ENCODE measurements at regions of chr1 and their contacts with region 1.

Region 1: DNA sequence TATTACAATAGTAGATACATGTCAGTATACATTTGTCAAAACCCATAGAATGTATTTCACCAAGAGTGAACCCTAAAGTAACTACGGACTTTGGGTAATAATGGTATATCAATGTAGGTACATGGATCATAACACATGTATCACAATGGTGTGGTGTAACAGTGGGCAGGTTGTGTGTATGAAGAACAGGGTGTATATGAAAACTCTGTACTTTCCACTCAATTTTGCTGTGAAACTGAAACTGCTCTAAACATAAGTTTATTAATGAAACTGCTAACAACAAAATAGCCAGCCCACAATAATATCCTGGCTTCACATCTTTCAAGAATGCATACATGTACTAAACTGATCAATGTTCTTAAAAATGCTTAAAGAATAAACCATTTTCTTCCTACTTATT is 90.2 kb downstream of the RUSC1 start:
- DNase-seq: no peak
- H3K4me3 ChIP-seq: no peak overlapping the region
- H3K27ac ChIP-seq: no peak overlapping the region
- H3K4me1 ChIP-seq: no peaks in the 10 kb centered on the region
- H3K27me3 ChIP-seq: no peaks in the 10 kb centered on the region
- CTCF ChIP-seq: no peak

Region 2: DNA sequence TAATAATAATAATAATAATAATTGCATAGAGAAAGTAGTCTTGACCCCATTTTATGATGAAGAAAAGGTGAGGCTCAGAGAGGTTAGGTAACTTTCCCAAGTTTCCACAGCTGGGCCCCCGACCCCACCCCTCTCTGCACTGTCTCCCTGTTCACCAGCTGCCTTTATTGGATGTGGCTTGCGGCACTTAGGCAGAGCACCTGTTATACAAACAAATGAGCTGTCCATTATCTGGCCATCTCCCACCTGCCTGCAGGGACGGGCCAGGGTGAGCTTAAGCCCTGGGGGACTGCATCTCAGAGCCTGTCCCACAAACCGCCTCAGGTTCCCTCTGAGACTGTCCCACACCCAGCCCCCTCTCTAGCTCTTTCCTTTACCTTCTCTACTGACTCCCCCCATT is 293.3 kb before region 1 on chr1:
- CTCF ChIA-PET with region 1: no interaction called
- dilution Hi-C with region 1: no loop called
- in situ Hi-C with region 1: no loop called
- intact Hi-C with region 1: no loop called
- DNase-seq: no peak
- H3K4me3 ChIP-seq: no peak overlapping the region
- H3K27ac ChIP-seq: no peak overlapping the region
- H3K4me1 ChIP-seq: peaks cover 4% of the 10 kb centered on the region
- H3K27me3 ChIP-seq: no peaks in the 10 kb centered on the region
- CTCF ChIP-seq: no peak

Region 3: DNA sequence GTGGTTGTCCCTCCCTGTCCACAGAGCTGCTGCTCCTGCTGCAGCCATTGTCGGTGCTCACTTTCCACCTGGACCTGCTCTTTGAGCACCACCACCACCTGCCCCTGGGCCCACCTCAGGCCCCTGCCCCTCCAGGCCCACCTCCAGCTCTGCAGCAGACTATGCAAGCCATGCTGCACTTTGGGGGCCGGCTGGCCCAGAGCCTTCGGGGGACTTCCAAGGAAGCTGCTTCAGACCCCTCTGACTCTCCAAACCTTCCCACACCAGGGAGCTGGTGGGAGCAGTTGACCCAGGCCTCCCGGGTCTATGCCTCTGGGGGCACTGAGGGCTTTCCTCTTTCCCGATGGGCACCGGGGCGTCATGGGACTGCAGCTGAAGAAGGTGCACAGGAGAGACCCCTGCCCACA is 84.3 kb before region 1 on chr1:
- CTCF ChIA-PET with region 1: no interaction called
- dilution Hi-C with region 1: no loop called
- in situ Hi-C with region 1: no loop called
- intact Hi-C with region 1: no loop called
- DNase-seq: no peak
- H3K4me3 ChIP-seq: no peak overlapping the region
- H3K27ac ChIP-seq: no peak overlapping the region
- H3K4me1 ChIP-seq: peaks cover 13% of the 10 kb centered on the region
- H3K27me3 ChIP-seq: no peaks in the 10 kb centered on the region
- CTCF ChIP-seq: no peak

Region 4: GRCh38 chr1:155339515-155340097 is 71.3 kb before region 1 on chr1:
- CTCF ChIA-PET with region 1: no interaction called
- dilution Hi-C with region 1: loop called (anchors 5 kb)
- in situ Hi-C with region 1: no loop called
- intact Hi-C with region 1: no loop called
- DNase-seq: no peak
- H3K4me3 ChIP-seq: no peak overlapping the region
- H3K27ac ChIP-seq: no peak overlapping the region
- H3K4me1 ChIP-seq: no peaks in the 10 kb centered on the region
- H3K27me3 ChIP-seq: no peaks in the 10 kb centered on the region
- CTCF ChIP-seq: no peak

Region 5: GRCh38 chr1:155466996-155467395 is 56.1 kb after region 1 on chr1:
- CTCF ChIA-PET with region 1: no interaction called
- dilution Hi-C with region 1: loop called (anchors 10 kb)
- in situ Hi-C with region 1: no loop called
- intact Hi-C with region 1: no loop called
- DNase-seq: peak; percentile 85
- H3K4me3 ChIP-seq: no peak overlapping the region
- H3K27ac ChIP-seq: peak overlapping the region; percentile 37
- H3K4me1 ChIP-seq: peaks cover 11% of the 10 kb centered on the region
- H3K27me3 ChIP-seq: no peaks in the 10 kb centered on the region
- CTCF ChIP-seq: no peak

Region 6: DNA sequence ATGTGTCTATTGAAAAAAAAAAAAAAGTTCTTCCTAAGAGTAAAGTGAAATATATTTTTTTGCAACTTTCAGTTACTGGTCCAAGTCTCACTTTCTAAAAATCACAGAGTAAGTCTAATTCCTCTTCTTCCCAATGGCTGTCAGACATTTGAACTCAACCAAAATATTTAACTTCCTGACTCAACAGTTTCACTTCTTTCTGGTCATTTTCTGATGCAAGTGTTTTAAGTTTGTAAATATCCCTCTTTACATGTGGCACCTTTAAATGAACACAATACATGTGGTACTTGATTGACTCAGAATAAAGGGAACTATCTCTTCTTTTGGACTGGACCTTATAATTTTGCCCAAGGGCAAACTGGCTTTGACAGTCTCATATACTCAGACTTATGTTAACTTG is 75.0 kb after region 1 on chr1:
- CTCF ChIA-PET with region 1: no interaction called
- dilution Hi-C with region 1: loop called (anchors 5 kb)
- in situ Hi-C with region 1: no loop called
- intact Hi-C with region 1: no loop called
- DNase-seq: no peak
- H3K4me3 ChIP-seq: no peak overlapping the region
- H3K27ac ChIP-seq: no peak overlapping the region
- H3K4me1 ChIP-seq: no peaks in the 10 kb centered on the region
- H3K27me3 ChIP-seq: no peaks in the 10 kb centered on the region
- CTCF ChIP-seq: no peak

Measured in mammary epithelial cell (primary cell).